ENCODE measurements at regions of chr1 and their contacts with region 1.

Region 1: GRCh38 chr1:44792783-44793714 is 5.1 kb upstream of the BEST4 start:
- DNase-seq: no peak
- H3K4me3 ChIP-seq: no peak overlapping the region
- H3K27ac ChIP-seq: no peak overlapping the region
- H3K4me1 ChIP-seq: no peaks in the 10 kb centered on the region
- H3K27me3 ChIP-seq: no peaks in the 10 kb centered on the region
- CTCF ChIP-seq: no peak

Region 2: GRCh38 chr1:44830900-44831304 is 37.9 kb after region 1 on chr1:
- intact Hi-C with region 1: loop called (anchors 5 kb)
- DNase-seq: no peak
- H3K4me3 ChIP-seq: no peak overlapping the region
- H3K27ac ChIP-seq: no peak overlapping the region
- H3K4me1 ChIP-seq: no peaks in the 10 kb centered on the region
- H3K27me3 ChIP-seq: no peaks in the 10 kb centered on the region
- CTCF ChIP-seq: no peak

Measured in colonic mucosa (tissue), 4 donors.